Activated T-helper 2 cell treated with anti-CD3 and anti-CD28 coated beads, Interferon-gamma antibody, Interleukin-2, Interleukin-4, amounts not matched to agents 10 μg/mL and 5 μg/mL and 100 μg/mL, durations not matched to agents 14 hours and 24 hours and 36 hours (primary cell): ENCODE measurements at regions of chr11 and their contacts with region 1.

Region 1: DNA sequence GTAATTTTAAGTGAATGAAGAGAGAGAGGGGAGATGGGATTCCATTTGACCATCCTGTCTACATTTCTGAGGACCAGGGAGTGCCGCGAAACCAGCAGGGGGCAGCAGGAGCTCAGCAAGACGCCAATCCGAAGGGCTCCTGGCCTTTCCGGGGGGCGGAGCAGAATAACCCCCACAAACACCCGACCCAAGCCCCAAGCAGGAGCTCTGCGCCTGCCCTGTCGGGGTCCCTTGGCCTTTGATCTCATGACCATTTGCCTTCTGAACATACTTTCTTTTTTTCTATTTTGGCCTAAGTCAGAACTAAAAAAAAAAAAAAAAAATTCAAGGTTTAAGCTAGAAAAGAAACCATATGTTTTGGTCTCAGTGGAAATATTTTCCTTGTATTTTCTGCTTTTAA is 21.9 kb upstream of the SCN2B start:
- DNase-seq: peak; percentile 69
- H3K4me3 Mint-ChIP-seq: peak overlapping the region; percentile 31
- H3K27ac Mint-ChIP-seq: peak overlapping the region; percentile 66
- H3K4me1 Mint-ChIP-seq: peaks cover 11% of the 10 kb centered on the region
- H3K27me3 Mint-ChIP-seq: no peaks in the 10 kb centered on the region

Region 2: DNA sequence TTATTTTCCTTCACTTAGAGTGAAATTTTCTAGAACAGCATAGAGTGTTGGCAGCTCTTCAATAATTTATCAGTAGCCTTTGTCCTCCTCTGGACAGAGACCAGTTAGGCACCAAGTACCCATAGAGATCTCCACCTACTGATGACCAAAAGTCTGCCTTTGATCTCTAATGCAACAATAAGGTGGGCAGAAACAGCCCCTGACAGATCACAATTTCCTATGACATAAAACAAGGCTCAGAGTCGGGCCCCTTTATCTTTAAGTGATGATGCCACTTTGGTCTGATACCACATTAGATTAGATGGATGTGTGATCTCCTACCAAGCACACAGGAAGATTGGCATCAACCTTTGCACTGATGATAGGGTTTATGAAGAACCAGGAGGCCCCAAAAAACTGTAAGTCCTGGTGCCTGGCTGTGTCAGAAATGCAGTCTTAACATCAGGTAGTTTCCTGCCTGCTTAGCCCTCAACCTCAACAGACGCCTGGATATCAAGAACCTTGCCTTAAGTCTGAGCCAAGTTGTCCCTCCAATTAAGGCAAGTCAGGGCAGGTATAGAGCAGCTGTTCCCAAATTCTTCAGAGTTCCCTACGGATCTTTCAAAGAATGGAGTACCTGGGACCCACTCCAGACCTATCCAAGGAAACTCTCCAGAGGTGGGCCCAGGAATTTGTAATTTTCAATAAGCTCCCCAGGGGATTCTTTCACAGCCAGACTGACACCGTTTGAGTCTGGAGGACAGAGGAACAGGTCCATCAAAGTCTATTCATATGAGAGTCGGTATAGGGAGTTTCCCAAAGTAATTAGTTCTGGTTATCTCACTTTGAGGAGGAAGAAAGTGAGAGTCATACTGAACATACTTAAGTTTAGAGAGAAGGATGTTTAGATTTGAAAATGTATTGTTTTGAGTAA is 152.1 kb before region 1 on chr11:
- intact Hi-C with region 1: loop called (anchors 5 kb)
- DNase-seq: peak; percentile 25
- H3K4me3 Mint-ChIP-seq: peak overlapping the region; percentile 17
- H3K27ac Mint-ChIP-seq: peak overlapping the region; percentile 97
- H3K4me1 Mint-ChIP-seq: peaks cover 83% of the 10 kb centered on the region
- H3K27me3 Mint-ChIP-seq: no peaks in the 10 kb centered on the region

Region 3: GRCh38 chr11:118109231-118109630 is 89.1 kb before region 1 on chr11:
- intact Hi-C with region 1: no loop called
- DNase-seq: no peak
- H3K4me3 Mint-ChIP-seq: no peak overlapping the region
- H3K27ac Mint-ChIP-seq: no peak overlapping the region
- H3K4me1 Mint-ChIP-seq: peaks cover 1% of the 10 kb centered on the region
- H3K27me3 Mint-ChIP-seq: peaks cover 17% of the 10 kb centered on the region

Region 4: DNA sequence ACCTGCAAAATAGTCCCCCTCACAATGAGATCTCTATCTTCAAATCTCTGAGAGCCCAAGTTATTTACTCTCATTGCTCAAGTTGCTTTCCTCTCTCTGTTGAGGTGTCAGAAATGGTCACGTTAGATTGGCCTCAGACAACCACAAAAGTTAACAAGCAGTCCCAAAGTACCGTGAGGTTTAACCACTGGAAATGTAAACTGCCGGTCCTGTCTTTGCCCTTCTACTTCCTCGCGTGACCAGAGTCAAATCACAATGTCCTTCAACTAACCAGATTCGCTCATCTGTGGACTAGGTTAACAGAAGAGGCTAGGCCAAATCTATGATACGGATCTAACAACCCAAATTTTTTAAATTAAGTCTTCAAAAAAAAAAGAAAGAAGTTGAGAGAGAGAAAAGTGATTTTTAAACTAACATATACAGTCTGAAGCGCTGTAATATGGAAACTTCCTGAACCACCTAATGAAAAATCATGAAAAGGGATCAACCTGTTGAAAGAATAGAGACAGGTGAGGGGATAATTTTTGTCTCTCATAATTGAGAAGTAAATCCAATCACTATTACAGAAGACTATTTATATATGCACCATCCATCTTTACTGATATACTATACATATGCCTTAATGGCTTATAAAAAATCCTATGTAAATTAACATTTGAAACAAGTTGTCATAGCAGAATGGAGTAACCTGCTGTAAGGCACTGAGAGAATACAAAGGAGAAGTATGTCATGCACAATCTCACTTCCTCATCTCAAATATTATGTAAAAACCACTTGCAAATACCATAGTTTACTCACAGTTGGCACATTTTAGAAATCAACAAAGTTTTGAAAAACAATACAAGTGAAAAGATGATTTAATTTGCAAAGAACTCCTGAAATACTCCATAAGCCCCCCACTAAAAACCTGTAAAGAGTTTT is 29.8 kb after region 1 on chr11:
- intact Hi-C with region 1: loop called (anchors 1 kb)
- DNase-seq: peak; percentile 47
- H3K4me3 Mint-ChIP-seq: peak overlapping the region; percentile 67
- H3K27ac Mint-ChIP-seq: peak overlapping the region; percentile 95
- H3K4me1 Mint-ChIP-seq: peaks cover 52% of the 10 kb centered on the region
- H3K27me3 Mint-ChIP-seq: no peaks in the 10 kb centered on the region

Region 5: DNA sequence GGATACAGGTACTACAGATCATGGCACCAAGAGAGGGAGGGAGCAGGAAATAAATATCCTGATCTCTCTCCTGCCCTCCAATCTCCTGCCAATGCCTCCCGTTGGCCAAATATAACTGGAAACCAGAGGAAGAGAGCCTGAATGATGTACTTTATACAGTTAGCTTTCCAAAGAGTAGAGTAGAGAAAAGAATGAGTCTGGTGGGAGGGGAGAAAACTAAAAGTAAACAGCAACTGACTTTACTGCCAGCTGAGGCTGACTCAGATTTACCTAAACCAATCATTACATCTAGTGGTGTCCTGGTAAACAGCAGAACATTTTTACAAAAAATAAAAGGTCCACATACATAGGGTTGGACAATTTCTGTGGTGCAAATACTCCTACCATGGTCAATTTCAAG is 48.7 kb after region 1 on chr11:
- intact Hi-C with region 1: loop called (anchors 1 kb)
- DNase-seq: no peak
- H3K4me3 Mint-ChIP-seq: peak overlapping the region; percentile 56
- H3K27ac Mint-ChIP-seq: peak overlapping the region; percentile 95
- H3K4me1 Mint-ChIP-seq: peaks cover 66% of the 10 kb centered on the region
- H3K27me3 Mint-ChIP-seq: no peaks in the 10 kb centered on the region

Region 6: GRCh38 chr11:118304568-118305248 is 106.3 kb after region 1 on chr11 and contains the start of gene CD3E:
- intact Hi-C with region 1: loop called (anchors 1 kb)
- DNase-seq: peak; percentile 64
- H3K4me3 Mint-ChIP-seq: peak within 1 kb of the TSS; percentile 89
- H3K27ac Mint-ChIP-seq: peak within 1 kb of the TSS; percentile 100
- H3K4me1 Mint-ChIP-seq: peaks cover 47% of the 10 kb centered on the region
- H3K27me3 Mint-ChIP-seq: no peaks in the 10 kb centered on the region
- total RNA-seq, gene CD3E: 518 and 529 TPM in 2 replicates

Region 7: DNA sequence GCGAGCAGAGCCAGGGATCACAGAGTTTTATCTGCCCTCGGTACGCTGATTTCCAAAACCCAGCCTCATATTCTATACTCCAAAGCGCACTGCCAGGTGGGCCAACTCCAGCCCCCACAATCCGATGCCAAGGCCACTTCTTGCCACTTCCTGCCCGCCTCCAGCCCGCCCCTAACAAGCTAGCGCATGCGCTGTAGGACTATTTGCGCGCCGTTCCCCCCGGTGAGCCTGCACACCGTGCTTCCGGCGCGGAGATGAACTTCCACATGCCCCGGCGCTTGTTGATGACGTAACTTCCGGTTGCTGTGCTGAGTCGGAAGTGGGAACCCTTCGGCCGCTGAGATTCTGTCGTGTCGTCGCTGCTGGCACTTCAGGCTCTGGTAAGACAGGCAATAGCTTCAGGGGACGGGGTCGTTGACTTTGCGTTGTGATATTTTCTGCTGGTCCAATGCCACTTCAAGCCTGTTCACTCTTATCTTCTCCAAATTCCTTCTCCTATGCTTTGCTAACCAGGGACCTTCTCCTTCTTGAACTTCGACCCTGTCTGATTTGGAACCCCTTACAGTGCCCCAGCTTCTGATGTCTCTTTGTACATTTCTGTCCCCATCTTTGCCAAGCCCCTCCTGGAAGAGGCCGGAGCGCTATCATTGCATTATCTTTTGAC is 161.1 kb after region 1 on chr11 and contains the start of gene UBE4A:
- intact Hi-C with region 1: loop called (anchors 5 kb)
- DNase-seq: peak; percentile 96
- H3K4me3 Mint-ChIP-seq: peak within 1 kb of the TSS; percentile 92
- H3K27ac Mint-ChIP-seq: peak within 1 kb of the TSS; percentile 84
- H3K4me1 Mint-ChIP-seq: peaks cover 33% of the 10 kb centered on the region
- H3K27me3 Mint-ChIP-seq: no peaks in the 10 kb centered on the region
- total RNA-seq, gene UBE4A: 41.2 and 44.1 TPM in 2 replicates